ENCODE measurements at regions of chr11 and their contacts with region 1.

Region 1: GRCh38 chr11:47437746-47438418 is 11.1 kb downstream of the RAPSN start:
- DNase-seq: peak; percentile 68
- ATAC-seq: peak; percentile 84
- H3K4me3 ChIP-seq: peak overlapping the region; percentile 70 to 80 (median 78)
- H3K27ac ChIP-seq: peak overlapping the region; percentile 97
- H3K4me1 ChIP-seq: peaks cover 73% of the 10 kb centered on the region
- H3K27me3 ChIP-seq: no peaks in the 10 kb centered on the region; a peak in 1 of 5 replicates
- CTCF ChIP-seq: peak; percentile 48
- EP300 ChIP-seq: 0 out of 4 replicates have a peak, but pooled peaks of 1 of the 2 experiments have one; percentile 48
- POLR2A ChIP-seq: peak; percentile 57 to 78
- RAD21 ChIP-seq: peak; percentile 55; the same call in 1 of the 2 replicates

Region 2: GRCh38 chr11:47448566-47449427 is 10.9 kb after region 1 on chr11 and contains the start of gene RAPSN:
- CTCF ChIA-PET with region 1: no interaction called
- POLR2A ChIA-PET with region 1: interaction called, 12 read pairs
- in situ Hi-C with region 1: no loop called
- intact Hi-C with region 1: no loop called
- DNase-seq: no peak
- ATAC-seq: peak; percentile 28
- H3K4me3 ChIP-seq: no peak within 1 kb of the TSS
- H3K27ac ChIP-seq: no peak within 1 kb of the TSS
- H3K4me1 ChIP-seq: peaks cover 37% of the 10 kb centered on the region
- H3K27me3 ChIP-seq: no peaks in the 10 kb centered on the region
- CTCF ChIP-seq: no peak
- EP300 ChIP-seq: no peak
- POLR2A ChIP-seq: no peak
- RAD21 ChIP-seq: no peak
- total RNA-seq, gene RAPSN: 0.60 and 1.2 TPM in 2 replicates